CD8-positive, alpha-beta T cell (primary cell): ENCODE measurements at regions of chr11 and their contacts with region 1.

Region 1: DNA sequence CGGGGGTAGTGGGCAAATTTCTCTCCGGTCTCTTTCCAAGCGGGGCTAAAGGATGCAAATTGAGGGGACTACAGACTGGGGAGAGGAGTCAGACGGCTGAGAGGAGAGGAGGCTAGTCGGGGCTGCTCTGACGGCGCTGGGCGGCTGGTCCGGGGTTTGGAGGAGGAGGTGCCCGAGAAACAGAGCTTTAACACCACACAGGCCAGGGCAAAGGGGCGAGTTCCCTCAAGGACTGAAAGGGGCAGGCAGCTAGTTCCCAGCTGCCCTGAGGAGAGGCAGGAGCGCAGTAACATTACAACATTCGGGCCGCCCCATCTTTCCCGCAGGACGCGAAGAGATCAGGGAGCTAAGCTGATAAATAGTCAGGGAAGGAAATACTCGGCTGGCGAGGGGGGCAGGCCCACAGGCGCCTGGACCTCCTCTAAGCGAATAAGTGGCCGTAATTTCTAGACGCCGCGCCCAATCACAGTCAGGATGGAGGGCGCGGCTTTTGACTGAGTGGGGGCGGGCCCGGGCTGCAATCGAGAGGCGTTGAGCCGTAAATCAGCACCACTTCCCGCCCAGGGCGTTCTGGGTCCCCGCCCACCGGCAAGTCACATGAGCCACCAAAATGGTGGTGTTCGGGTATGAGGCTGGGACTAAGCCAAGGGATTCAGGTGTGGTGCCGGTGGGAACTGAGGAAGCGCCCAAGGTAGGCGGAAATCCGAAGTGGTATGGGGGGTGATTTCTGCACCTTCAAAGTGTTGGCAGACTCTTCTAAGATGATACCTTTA is at the start of gene TMEM126B:
- DNase-seq: peak; percentile 89 to 97 (median 96)
- ATAC-seq: peak; percentile 97
- H3K4me3 ChIP-seq: peak within 1 kb of the TSS; percentile 80 to 91
- H3K4me3 Mint-ChIP-seq: peak within 1 kb of the TSS; percentile 91
- H3K27ac ChIP-seq: peak within 1 kb of the TSS; percentile 76 to 83
- H3K27ac Mint-ChIP-seq: peak within 1 kb of the TSS; percentile 96
- H3K4me1 ChIP-seq: peaks cover 14% of the 10 kb centered on the region
- H3K4me1 Mint-ChIP-seq: peaks cover 51% of the 10 kb centered on the region
- H3K27me3 ChIP-seq: peaks cover 0 to 1% of the 10 kb centered on the region in 2 experiments
- H3K27me3 Mint-ChIP-seq: no peaks in the 10 kb centered on the region
- CTCF ChIP-seq: no peak
- total RNA-seq, gene TMEM126B: 16.2 to 19.9 TPM

Region 2: DNA sequence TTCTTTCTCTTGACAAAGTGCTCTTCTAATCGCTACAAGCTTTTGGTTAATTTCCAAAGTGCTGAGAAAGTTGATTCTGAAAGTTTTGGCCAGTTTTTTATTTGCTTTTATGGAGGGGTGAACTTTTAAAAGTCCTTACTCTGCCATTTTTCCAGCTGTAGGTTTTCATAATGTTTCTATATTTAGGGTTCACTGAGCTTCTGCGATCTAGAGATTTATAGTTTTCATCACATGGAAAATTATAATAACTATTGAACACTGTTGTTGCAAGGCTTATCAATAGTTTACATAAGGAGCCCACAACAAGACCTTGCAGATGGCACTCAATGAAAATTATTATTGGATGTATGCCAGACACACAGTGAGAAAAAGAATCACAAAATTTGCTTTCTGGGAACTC is 56.1 kb before region 1 on chr11:
- CTCF ChIA-PET with region 1: no interaction called
- POLR2A ChIA-PET with region 1: no interaction called
- intact Hi-C with region 1: no loop called
- DNase-seq: no peak
- ATAC-seq: no peak
- H3K4me3 ChIP-seq: no peak overlapping the region
- H3K4me3 Mint-ChIP-seq: no peak overlapping the region
- H3K27ac ChIP-seq: no peak overlapping the region
- H3K27ac Mint-ChIP-seq: no peak overlapping the region
- H3K4me1 ChIP-seq: no peaks in the 10 kb centered on the region
- H3K4me1 Mint-ChIP-seq: no peaks in the 10 kb centered on the region
- H3K27me3 ChIP-seq: peaks cover 0 to 2% of the 10 kb centered on the region in 2 experiments
- H3K27me3 Mint-ChIP-seq: peaks cover 24% of the 10 kb centered on the region
- CTCF ChIP-seq: no peak

Region 3: GRCh38 chr11:85647604-85648299 is 19.6 kb after region 1 on chr11 and contains the start of gene TMEM126A:
- CTCF ChIA-PET with region 1: interaction called, 3 read pairs
- POLR2A ChIA-PET with region 1: interaction called, 35 read pairs
- intact Hi-C with region 1: loop called (anchors 1 kb)
- DNase-seq: peak; percentile 77 to 94 (median 90)
- ATAC-seq: peak; percentile 98
- H3K4me3 ChIP-seq: peak within 1 kb of the TSS; percentile 82 to 92
- H3K4me3 Mint-ChIP-seq: peak within 1 kb of the TSS; percentile 92
- H3K27ac ChIP-seq: peak within 1 kb of the TSS; percentile 75 to 90
- H3K27ac Mint-ChIP-seq: peak within 1 kb of the TSS; percentile 96
- H3K4me1 ChIP-seq: peaks cover 18% of the 10 kb centered on the region
- H3K4me1 Mint-ChIP-seq: peaks cover 39% of the 10 kb centered on the region
- H3K27me3 ChIP-seq: no peaks in the 10 kb centered on the region
- H3K27me3 Mint-ChIP-seq: peaks cover 17% of the 10 kb centered on the region
- CTCF ChIP-seq: no peak
- total RNA-seq, gene TMEM126A: 23.3 to 26.8 TPM

Region 4: DNA sequence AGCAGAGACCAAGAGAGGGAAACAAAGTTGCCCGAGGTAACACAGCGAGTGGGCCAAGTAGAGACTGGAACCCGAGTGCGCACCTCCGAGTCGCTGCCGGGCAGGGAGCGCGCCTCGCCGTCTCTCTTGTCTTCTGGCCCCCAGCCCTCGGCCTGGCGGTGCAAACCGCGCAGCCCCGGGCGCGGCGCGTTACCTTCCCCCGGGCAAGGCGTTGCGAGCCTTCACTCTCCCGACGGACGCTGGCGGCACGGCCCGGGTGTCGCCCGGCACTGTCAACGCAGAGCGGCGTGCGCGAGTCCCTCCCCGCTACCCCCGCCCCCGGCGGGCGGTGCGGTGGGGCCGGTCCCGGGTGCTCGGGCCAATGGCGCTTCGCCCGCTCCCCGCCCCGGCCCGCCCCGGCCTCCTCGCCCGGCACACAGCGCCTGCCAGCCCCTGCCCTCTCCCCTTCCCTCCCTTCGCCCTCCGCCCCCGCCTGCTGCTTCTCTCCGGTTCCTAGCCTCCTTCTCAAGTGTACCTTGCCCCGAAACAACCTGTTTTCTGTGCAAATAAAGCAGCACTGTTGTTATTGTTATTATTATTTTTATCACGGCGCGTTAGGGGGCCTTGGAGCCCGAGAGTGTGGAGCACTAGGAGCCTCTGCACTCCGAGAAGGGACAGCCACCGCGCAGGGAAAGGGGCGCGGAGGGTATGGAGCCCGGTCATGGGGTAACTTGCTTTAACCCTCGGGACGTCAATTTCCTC is 182.9 kb after region 1 on chr11 and contains the start of gene SYTL2:
- CTCF ChIA-PET with region 1: no interaction called
- POLR2A ChIA-PET with region 1: no interaction called
- intact Hi-C with region 1: loop called in 1 of 2 experiments (anchors 5 kb)
- DNase-seq: peak; percentile 53 to 89 (median 74)
- ATAC-seq: peak; percentile 78
- H3K4me3 ChIP-seq: peak within 1 kb of the TSS; percentile 68 to 85
- H3K4me3 Mint-ChIP-seq: peak within 1 kb of the TSS; percentile 93
- H3K27ac ChIP-seq: peak within 1 kb of the TSS; percentile 50 to 56
- H3K27ac Mint-ChIP-seq: peak within 1 kb of the TSS; percentile 93
- H3K4me1 ChIP-seq: peaks cover 19% of the 10 kb centered on the region
- H3K4me1 Mint-ChIP-seq: peaks cover 48% of the 10 kb centered on the region
- H3K27me3 ChIP-seq: no peaks in the 10 kb centered on the region
- H3K27me3 Mint-ChIP-seq: peaks cover 2% of the 10 kb centered on the region
- CTCF ChIP-seq: no peak
- total RNA-seq, gene SYTL2: 37.2 to 43.6 TPM

Region 5: GRCh38 chr11:86302100-86302793 is 674.1 kb after region 1 on chr11 and contains the start of gene HIKESHI:
- CTCF ChIA-PET with region 1: no interaction called
- POLR2A ChIA-PET with region 1: no interaction called
- intact Hi-C with region 1: loop called (anchors 1 kb)
- DNase-seq: peak; percentile 74 to 96 (median 93)
- ATAC-seq: peak; percentile 98
- H3K4me3 ChIP-seq: peak within 1 kb of the TSS; percentile 73 to 86
- H3K4me3 Mint-ChIP-seq: peak within 1 kb of the TSS; percentile 99
- H3K27ac ChIP-seq: peak within 1 kb of the TSS; percentile 74 to 76
- H3K27ac Mint-ChIP-seq: peak within 1 kb of the TSS; percentile 99
- H3K4me1 ChIP-seq: peaks cover 22% of the 10 kb centered on the region
- H3K4me1 Mint-ChIP-seq: peaks cover 29% of the 10 kb centered on the region
- H3K27me3 ChIP-seq: no peaks in the 10 kb centered on the region
- H3K27me3 Mint-ChIP-seq: no peaks in the 10 kb centered on the region
- CTCF ChIP-seq: no peak
- total RNA-seq, gene HIKESHI: 4.9 to 6.9 TPM